Esophagus muscularis mucosa (tissue), 4 donors: ENCODE measurements at regions of chr11 and their contacts with region 1.

Region 1: GRCh38 chr11:87290304-87290922 is 252.7 kb downstream of the TMEM135 start:
- DNase-seq: no peak
- H3K4me3 ChIP-seq: no peak overlapping the region
- H3K27ac ChIP-seq: no peak overlapping the region
- H3K4me1 ChIP-seq: no peaks in the 10 kb centered on the region
- H3K27me3 ChIP-seq: no peaks in the 10 kb centered on the region
- CTCF ChIP-seq: peak; percentile 61 to 64 (median 62)
- EP300 ChIP-seq: no peak
- POLR2A ChIP-seq: no peak

Region 2: GRCh38 chr11:86869966-86870570 is 420.3 kb before region 1 on chr11:
- intact Hi-C with region 1: loop called (anchors 5 kb)
- DNase-seq: no peak
- H3K4me3 ChIP-seq: no peak overlapping the region
- H3K27ac ChIP-seq: no peak overlapping the region
- H3K4me1 ChIP-seq: peaks cover 0 to 10% (median 0%) of the 10 kb centered on the region in 4 donors
- H3K27me3 ChIP-seq: no peaks in the 10 kb centered on the region
- CTCF ChIP-seq: peak; percentile 76 to 85 (median 79)
- EP300 ChIP-seq: no peak
- POLR2A ChIP-seq: no peak

Region 3: DNA sequence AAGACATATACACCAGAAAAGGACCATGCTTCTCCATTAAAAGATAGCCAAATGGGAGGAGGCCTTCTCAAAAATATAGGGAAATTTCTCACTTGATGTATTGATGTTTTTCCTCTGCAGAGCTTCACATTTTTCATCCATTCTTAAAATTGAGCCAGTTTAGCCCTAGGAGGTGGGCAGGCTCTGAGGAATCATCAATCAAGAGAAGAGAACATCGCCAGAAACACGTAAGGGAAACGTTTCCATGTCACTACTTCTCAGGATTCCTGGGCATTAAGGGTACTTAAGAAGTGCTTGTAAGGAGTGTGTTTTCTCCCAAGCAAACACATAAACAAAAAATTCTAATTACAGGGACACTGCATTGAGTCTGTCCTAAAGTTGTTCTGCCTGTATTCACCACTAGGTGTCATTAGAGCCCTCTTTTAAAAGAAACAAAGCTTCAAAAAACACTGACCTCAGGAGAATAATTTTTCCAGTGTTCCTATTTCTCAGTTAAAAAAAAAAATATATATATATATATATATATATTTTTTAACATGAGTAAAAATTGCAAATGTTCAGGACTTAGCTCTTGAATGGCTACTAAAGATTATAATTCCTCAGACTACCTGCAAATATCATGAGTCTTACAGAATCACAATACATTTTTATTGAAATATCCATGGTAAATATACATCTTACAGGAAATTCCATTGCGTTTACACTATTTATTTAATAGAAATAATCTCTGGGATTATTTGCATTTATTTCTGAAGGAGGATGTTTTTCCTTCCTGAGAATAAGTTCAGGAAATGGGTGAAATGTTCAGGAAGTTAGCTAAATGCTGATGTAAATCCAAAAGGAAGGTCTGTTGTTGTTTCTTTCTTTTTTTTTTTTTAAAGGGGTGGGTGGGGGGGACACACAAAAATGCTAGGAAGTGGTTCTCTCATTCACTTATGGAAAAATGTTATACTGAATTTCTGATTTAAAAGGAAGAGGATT is 351.2 kb before region 1 on chr11:
- intact Hi-C with region 1: loop called (anchors 2 kb)
- DNase-seq: no peak
- H3K4me3 ChIP-seq: peak overlapping the region in 1 of 4 donors; percentile 27
- H3K27ac ChIP-seq: peak overlapping the region; percentile 72 to 80 (median 77)
- H3K4me1 ChIP-seq: peaks cover 46 to 86% (median 73%) of the 10 kb centered on the region in 4 donors
- H3K27me3 ChIP-seq: no peaks in the 10 kb centered on the region
- CTCF ChIP-seq: peak; percentile 61 to 79 (median 70)
- EP300 ChIP-seq: no peak
- POLR2A ChIP-seq: no peak

Region 4: DNA sequence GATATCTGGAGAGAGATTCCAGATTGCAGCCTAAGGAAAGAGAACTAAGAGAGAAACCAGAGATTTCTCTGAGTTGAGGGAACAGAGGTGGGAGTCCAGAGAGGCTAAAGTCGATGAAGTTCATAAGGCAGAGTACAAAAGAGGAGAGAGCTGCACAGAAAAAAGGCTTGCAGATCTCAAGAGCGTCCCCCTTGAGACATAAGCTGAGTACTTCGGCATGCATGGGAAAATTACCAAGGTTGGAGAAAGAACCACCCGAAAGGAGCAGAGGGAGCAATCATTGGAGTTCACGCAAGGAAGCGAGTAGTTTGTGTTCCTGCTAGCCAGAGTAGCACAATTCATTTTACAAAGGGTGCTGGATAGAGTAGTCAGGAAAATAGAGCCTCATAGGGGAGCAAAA is 40.9 kb after region 1 on chr11:
- intact Hi-C with region 1: no loop called
- DNase-seq: no peak
- H3K4me3 ChIP-seq: no peak overlapping the region
- H3K27ac ChIP-seq: peak overlapping the region in 1 of 4 donors; percentile 2
- H3K4me1 ChIP-seq: peaks cover 0 to 4% (median 1%) of the 10 kb centered on the region in 4 donors
- H3K27me3 ChIP-seq: no peaks in the 10 kb centered on the region
- CTCF ChIP-seq: no peak
- EP300 ChIP-seq: no peak
- POLR2A ChIP-seq: no peak

Region 5: DNA sequence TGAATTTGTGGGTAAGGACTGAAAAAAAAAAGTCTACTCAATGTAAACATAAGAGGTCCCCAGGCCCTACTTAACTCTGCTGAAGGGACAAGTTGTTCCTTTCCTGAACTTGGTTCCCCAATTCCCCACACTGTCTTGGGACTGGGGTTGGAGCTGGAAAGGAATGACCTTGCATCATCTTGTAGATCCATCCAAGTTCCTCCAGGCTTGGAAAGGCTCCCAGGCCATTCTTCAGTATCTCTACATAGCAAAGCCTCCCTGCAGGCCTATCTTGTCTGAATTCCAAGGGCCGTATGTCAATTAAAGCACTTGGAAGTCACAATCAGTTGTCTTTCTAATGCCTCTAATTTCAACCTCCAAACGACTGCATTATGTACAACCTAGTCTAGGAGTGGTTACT is 108.5 kb after region 1 on chr11:
- intact Hi-C with region 1: no loop called
- DNase-seq: no peak
- H3K4me3 ChIP-seq: no peak overlapping the region
- H3K27ac ChIP-seq: no peak overlapping the region
- H3K4me1 ChIP-seq: no peaks in the 10 kb centered on the region
- H3K27me3 ChIP-seq: no peaks in the 10 kb centered on the region
- CTCF ChIP-seq: no peak
- EP300 ChIP-seq: no peak
- POLR2A ChIP-seq: no peak